ENCODE measurements at regions of chr4 and their contacts with region 1.

Region 1: DNA sequence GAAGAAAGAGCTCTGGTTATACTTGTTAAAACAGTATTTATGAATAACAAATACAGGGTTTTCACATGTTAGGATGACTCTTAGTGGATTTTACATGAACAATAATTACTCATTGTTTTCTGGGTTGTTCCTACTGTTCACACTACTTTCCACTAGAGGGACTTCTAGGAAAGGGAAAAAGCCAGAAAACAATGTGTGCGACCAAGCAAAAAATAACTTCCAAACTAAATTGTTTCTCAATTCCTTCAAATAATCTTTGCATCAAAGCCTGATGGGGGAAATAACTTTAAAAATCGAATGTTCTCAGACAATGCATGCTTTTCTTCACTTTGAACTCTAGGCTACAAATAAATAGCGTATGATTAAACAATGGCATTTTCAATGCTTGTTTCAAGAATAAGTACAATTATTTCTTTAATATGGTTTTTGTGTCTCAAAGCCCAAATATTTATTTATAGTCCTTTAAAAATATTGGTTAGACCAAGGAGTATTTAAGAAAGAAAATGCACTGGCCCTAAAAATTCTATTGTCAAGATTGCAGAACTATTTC is 72.1 kb upstream of the ETNPPL start:
- DNase-seq: no peak
- ATAC-seq: peak in 1 of 8 donors; percentile 46
- H3K4me3 ChIP-seq: no peak overlapping the region
- H3K27ac ChIP-seq: no peak overlapping the region
- H3K4me1 ChIP-seq: peaks cover 0 to 19% (median 12%) of the 10 kb centered on the region in 9 donors
- H3K27me3 ChIP-seq: no peaks in the 10 kb centered on the region
- CTCF ChIP-seq: peak; percentile 36 to 82 (median 70)

Region 2: DNA sequence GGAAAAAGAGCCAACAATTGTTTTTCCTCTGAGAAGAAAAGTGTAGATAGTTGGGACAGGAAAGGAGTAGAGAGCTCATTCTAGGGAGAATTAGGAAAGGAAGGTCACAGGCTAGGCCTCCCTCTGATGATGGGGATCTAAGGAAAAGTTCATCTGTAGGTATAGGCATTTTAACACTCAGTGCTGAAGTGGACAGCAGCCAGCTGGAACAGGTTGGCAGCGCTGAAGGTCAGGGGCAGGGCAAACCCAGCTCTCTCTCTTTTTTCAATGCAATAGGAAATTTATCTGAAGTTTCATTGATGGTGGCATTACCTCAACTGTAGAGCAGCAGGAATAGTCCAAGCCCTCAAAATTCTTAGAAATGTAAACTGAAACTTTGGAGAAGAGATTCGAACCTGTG is 26.4 kb after region 1 on chr4:
- intact Hi-C with region 1: no loop called
- DNase-seq: no peak
- ATAC-seq: peak in 1 of 8 donors; percentile 47
- H3K4me3 ChIP-seq: no peak overlapping the region
- H3K27ac ChIP-seq: no peak overlapping the region
- H3K4me1 ChIP-seq: no peaks in the 10 kb centered on the region
- H3K27me3 ChIP-seq: no peaks in the 10 kb centered on the region
- CTCF ChIP-seq: no peak

Region 3: DNA sequence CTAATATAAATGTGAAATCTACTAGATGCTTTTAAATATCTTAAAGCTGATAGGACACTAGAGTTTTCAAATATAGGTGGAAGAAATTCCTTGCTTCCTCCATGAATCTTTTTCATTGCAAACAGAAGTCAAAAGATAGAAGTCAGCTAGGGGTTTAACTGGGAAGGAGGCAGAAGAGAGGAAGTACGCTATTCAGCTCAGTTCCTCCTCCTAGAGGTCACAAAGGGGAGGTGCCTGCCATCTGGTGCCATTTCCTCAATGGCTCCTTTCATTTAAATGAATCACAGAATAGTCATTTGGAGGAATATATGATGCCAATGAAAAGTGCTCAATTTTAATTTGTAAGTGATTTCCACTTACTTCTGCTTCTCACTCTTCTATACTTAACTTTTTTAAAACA is 459.1 kb after region 1 on chr4:
- intact Hi-C with region 1: loop called in 3 of 10 experiments (anchors 5 to 10 kb)
- DNase-seq: no peak
- ATAC-seq: no peak
- H3K4me3 ChIP-seq: no peak overlapping the region
- H3K27ac ChIP-seq: no peak overlapping the region
- H3K4me1 ChIP-seq: no peaks in the 10 kb centered on the region
- H3K27me3 ChIP-seq: peaks cover 0 to 15% (median 0%) of the 10 kb centered on the region in 7 donors
- CTCF ChIP-seq: peak in 7 of 9 donors; percentile 11 to 52 (median 26)

Region 4: DNA sequence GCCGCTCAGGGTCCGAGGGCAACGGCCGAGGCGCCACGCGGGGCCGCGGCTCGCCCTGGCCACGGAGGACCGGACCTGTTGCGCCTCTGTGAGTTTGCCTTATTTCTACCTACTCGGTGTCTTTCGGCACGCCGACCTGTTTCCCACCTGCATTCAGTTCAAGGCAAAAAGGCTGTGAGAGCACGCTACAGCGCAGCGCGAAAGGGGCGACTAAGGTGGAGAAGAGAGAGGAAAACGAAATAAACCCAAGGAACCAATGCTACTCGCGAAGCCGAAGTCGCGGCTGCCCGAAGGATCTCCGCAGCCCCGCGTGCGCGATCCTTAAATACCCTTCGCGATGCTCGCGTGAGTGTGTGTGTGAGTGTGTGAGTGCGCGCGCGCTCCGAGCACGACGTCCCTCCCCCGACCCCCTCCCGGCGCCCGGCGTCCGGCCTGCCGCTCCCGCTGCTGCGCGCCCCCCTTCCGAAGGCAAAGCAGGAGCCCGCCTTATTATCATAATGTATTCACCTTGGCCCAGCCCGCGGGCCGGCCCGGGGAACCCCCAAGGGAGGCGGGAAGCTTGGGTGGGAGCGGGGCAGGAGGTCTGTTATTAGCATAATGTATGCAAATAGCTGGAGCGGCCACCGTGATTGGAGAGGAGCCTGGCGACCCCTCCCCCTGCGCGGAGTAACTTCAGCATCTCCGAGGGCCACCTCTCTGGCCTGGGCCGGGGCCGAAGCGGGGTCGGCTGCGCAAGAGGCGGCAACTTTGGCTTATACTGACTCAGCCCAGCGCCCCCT is 467.6 kb after region 1 on chr4 and contains the start of gene COL25A1:
- intact Hi-C with region 1: loop called in 6 of 10 experiments (anchors 5 to 10 kb)
- DNase-seq: peak; percentile 49 to 53
- ATAC-seq: peak; percentile 75 to 91 (median 87)
- H3K4me3 ChIP-seq: peak within 1 kb of the TSS; percentile 39 to 78 (median 63)
- H3K27ac ChIP-seq: peak within 1 kb of the TSS in 4 of 10 donors; percentile 21 to 59 (median 28)
- H3K4me1 ChIP-seq: peaks cover 0 to 20% (median 11%) of the 10 kb centered on the region in 9 donors
- H3K27me3 ChIP-seq: peaks cover 0 to 61% (median 26%) of the 10 kb centered on the region in 7 donors
- CTCF ChIP-seq: no peak
- total RNA-seq, gene COL25A1: 0.07 to 1.2 (median 0.49) TPM

Region 5: GRCh38 chr4:109406338-109406931 is 571.5 kb after region 1 on chr4:
- intact Hi-C with region 1: loop called (anchors 2 to 5 kb)
- DNase-seq: peak in 1 of 2 donors; percentile 32
- ATAC-seq: peak in 5 of 8 donors; percentile 53 to 71 (median 64)
- H3K4me3 ChIP-seq: no peak overlapping the region
- H3K27ac ChIP-seq: no peak overlapping the region
- H3K4me1 ChIP-seq: peaks cover 0 to 2% (median 0%) of the 10 kb centered on the region in 9 donors
- H3K27me3 ChIP-seq: no peaks in the 10 kb centered on the region
- CTCF ChIP-seq: peak; percentile 50 to 82 (median 70)

Region 6: DNA sequence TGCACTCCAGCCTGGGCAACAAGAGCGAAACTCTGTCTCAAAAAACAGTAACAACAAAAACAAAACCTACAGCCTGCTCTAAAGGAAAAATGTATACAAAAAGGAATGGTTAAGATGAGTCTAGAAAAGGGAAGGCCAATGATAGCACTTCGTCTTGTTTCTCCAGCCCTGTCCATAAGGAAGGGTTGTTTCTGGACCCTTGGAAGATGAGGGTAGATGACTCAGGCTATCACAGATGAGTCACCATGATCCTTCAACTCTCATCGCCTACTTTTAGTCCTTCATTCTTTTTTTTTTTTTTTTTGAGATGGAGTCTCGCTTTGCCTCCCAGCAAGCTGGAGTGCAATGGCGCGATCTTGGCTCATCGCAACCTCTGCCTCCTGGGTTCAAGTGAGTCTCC is 886.1 kb after region 1 on chr4:
- intact Hi-C with region 1: loop called in 1 of 10 experiments (anchors 5 kb)
- DNase-seq: no peak
- ATAC-seq: peak in 1 of 8 donors; percentile 29
- H3K4me3 ChIP-seq: no peak overlapping the region
- H3K27ac ChIP-seq: no peak overlapping the region
- H3K4me1 ChIP-seq: no peaks in the 10 kb centered on the region
- H3K27me3 ChIP-seq: no peaks in the 10 kb centered on the region
- CTCF ChIP-seq: no peak

Measured in heart right ventricle (tissue), 16 donors.